ENCODE measurements at regions of chr4 and their contacts with region 1.

Region 1: GRCh38 chr4:153127760-153128494 is 76.3 kb upstream of the TRIM2 start:
- DNase-seq: peak; percentile 90
- H3K4me3 ChIP-seq: no peak overlapping the region
- H3K27ac ChIP-seq: no peak overlapping the region
- H3K4me1 ChIP-seq: no peaks in the 10 kb centered on the region
- H3K27me3 ChIP-seq: no peaks in the 10 kb centered on the region
- CTCF ChIP-seq: peak; percentile 69 to 90 (median 87)
- POLR2A ChIP-seq: no peak

Region 2: GRCh38 chr4:152843481-152844090 is 284.3 kb before region 1 on chr4:
- intact Hi-C with region 1: loop called (anchors 10 kb)
- DNase-seq: no peak
- H3K4me3 ChIP-seq: no peak overlapping the region
- H3K27ac ChIP-seq: no peak overlapping the region
- H3K4me1 ChIP-seq: no peaks in the 10 kb centered on the region
- H3K27me3 ChIP-seq: no peaks in the 10 kb centered on the region
- CTCF ChIP-seq: no peak
- POLR2A ChIP-seq: no peak

Region 3: DNA sequence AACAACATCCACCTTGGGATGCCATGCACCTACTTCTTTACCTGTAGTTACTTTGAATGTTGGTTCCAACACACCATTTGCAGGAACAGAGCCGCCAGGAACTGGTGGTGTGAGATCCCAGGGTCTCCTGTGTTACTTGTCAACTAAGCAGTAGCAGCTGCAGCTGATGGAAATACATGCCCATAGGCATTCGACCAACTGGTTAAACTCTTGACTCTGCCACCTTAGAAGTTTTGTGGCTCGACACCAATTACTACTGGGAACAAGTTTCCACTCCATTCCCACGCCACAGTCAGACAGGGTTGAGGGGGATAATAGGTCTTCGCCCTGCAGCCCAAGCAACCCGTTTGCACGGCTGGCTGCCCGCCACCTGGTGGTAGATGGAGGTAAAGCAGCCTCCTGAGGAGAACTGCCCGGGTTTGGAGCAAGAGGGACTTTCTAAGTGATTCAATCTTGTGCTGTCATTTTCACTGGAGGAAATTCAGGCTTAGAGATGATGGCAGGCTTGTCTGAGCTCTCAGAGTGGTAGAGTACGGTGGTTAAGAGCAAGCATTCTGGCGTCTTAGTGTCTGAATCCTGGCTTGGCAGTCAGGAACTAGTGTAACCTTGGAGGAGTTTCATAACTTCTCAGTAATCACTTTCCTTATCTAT is 42.8 kb before region 1 on chr4:
- intact Hi-C with region 1: loop called (anchors 2 kb)
- DNase-seq: peak; percentile 60
- H3K4me3 ChIP-seq: no peak overlapping the region
- H3K27ac ChIP-seq: no peak overlapping the region
- H3K4me1 ChIP-seq: no peaks in the 10 kb centered on the region
- H3K27me3 ChIP-seq: no peaks in the 10 kb centered on the region
- CTCF ChIP-seq: peak; percentile 91 to 96 (median 94)
- POLR2A ChIP-seq: no peak

Region 4: GRCh38 chr4:153189016-153189801 is 61.3 kb after region 1 on chr4:
- intact Hi-C with region 1: no loop called
- DNase-seq: no peak
- H3K4me3 ChIP-seq: no peak overlapping the region
- H3K27ac ChIP-seq: no peak overlapping the region
- H3K4me1 ChIP-seq: no peaks in the 10 kb centered on the region
- H3K27me3 ChIP-seq: no peaks in the 10 kb centered on the region
- CTCF ChIP-seq: no peak
- POLR2A ChIP-seq: no peak

Region 5: GRCh38 chr4:153497988-153498967 is 370.4 kb after region 1 on chr4:
- intact Hi-C with region 1: no loop called
- DNase-seq: no peak
- H3K4me3 ChIP-seq: no peak overlapping the region
- H3K27ac ChIP-seq: peak overlapping the region in 1 of 2 donors; percentile 30
- H3K4me1 ChIP-seq: no peaks in the 10 kb centered on the region
- H3K27me3 ChIP-seq: no peaks in the 10 kb centered on the region
- CTCF ChIP-seq: no peak
- POLR2A ChIP-seq: no peak

Region 6: DNA sequence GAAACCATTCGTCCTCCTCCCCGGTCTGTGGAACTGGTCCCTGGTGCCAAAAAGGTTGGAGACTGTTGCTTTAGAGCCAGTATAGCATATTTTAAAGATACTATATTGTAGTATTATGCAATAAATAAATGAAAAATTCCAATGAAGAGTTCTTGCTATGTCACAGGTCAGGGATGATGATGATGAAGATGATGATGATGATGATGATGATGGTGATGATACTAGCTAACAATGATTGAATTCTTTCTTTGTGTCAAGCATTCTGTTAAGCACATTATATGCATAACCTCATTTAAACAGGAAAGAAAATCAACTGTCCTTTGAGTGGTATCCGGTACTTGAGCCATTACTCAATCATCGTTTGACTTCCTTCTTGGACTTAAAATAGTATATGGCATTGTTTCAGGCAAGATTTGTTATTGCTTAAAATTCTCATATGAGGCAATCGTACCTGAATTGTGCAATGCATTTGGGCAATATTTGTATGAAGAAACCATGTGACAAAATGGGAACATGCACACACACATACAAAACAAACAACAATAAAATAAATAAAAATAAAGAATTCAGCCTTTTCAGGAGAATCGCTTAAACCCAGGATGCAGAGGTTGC is 533.4 kb after region 1 on chr4:
- intact Hi-C with region 1: no loop called
- DNase-seq: no peak
- H3K4me3 ChIP-seq: no peak overlapping the region
- H3K27ac ChIP-seq: no peak overlapping the region
- H3K4me1 ChIP-seq: no peaks in the 10 kb centered on the region
- H3K27me3 ChIP-seq: no peaks in the 10 kb centered on the region
- CTCF ChIP-seq: no peak
- POLR2A ChIP-seq: no peak